Sciatic nerve (tissue), 2 donors: ENCODE measurements at regions of chr11 and their contacts with region 1.

Region 1: DNA sequence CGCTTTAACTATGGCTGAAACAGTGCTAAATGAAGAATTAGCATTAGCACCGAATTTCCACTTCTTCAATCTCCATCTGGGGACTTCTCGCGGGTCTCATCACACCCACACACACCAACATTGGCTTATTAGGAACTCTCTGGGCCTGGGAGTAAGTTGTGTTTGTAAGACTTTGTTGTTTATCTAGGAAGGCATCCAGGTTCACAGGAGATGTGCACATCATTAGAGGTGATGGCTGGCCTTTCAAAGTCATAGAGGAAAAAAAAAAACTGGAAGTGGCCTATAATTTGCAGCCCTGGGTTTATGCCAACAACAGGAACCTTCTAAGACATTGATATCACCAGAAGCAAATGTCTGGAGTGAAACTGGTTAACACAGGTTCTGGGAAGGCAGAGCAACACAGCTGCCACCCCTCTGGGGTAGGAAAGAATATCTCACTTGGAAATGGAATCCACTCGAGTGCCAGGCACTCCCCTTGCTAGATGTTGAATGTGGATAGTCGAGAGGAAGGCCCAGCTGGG is 84.5 kb downstream of the TRAF6 start:
- DNase-seq: no peak
- ATAC-seq: peak; percentile 16

Region 2: DNA sequence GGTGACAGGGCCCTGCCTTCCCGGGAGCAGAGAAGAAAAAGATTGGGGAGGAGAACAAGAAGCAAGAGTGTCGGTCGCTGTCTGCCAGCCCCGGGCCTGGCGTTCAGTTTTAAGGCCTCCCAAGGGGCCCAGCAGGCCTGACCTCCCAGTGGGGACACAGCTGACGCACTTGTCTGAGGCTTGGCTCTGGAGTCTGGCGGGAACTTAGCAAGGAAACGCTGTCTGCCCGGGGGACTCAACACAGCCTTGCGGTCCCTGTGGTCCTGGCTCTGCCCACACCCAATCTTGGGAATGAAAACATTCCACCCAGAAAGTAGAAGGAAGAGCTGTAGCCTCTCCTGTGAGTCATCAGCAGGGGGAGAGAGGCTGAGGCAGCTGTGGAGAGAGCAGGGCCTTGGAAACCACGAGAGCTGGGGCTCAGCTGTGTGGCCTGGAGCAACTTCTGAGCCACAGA is 30.1 kb after region 1 on chr11:
- intact Hi-C with region 1: loop called (anchors 1 kb)
- DNase-seq: peak; percentile 74
- ATAC-seq: peak; percentile 91

Region 3: DNA sequence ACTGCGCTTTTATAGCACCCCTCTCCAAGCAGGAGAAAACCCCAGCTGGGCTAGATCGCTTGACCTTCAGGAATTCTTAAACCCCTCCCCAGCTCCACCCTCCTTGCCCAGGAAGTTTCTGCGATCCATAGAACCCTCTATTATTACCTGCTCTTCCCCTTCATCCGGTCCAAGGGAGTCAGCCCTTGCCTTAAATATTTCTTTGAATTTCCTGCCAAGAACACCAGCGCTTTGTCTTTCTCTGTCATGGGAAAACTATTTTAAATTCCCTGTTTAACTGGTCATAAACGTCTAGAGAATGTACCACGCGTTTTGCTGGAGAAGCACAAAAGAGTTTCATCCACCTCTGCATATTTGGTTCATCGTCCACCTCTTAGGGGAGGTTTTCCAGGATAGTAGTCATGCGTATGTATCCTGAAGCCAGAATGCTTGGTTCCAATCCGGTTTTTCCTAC is 85.0 kb after region 1 on chr11:
- intact Hi-C with region 1: no loop called
- DNase-seq: no peak
- ATAC-seq: peak; percentile 4